Activated CD8-positive, alpha-beta T cell treated with anti-CD3 and anti-CD28 coated beads for 36 hours (primary cell): ENCODE measurements at regions of chr20 and their contacts with region 1.

Region 1: DNA sequence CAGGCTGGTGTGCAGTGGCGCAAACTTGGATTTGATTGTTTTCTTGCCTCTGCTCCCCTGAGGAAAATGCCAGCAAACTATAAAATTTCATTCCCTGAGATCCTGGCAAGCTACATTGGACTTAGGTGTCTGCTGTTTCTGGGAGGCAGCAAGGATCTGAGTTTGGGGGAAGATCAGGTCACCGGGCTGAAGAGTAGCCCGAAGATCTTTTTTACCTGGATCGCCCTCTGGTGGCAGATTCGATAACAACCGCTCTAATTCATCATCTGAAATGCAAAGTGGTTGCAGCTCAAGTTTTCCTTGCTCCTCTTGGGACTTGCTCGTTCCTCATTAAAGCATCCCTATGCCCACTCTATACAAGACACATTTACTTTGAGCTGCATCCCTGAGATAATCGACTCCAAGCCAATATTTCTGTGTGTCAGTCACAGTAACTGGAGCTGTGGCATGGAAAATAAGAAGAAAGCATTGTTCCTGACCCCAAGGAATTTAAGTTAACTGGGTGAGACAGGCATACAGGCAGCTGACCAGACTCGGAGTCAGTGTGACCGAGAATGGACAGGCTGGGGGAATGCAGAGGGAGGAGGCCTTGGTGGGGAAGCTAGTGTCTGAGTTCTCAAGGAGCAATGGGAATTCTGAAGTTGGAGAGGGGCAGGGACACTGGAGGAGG is 131.8 kb upstream of the PROKR2 start:
- DNase-seq: peak; percentile 77
- ATAC-seq: peak; percentile 56
- H3K4me3 Mint-ChIP-seq: no peak overlapping the region
- H3K27ac Mint-ChIP-seq: no peak overlapping the region
- H3K4me1 Mint-ChIP-seq: no peaks in the 10 kb centered on the region
- H3K27me3 Mint-ChIP-seq: peaks cover 23% of the 10 kb centered on the region
- CTCF ChIP-seq: peak; percentile 67

Region 2: DNA sequence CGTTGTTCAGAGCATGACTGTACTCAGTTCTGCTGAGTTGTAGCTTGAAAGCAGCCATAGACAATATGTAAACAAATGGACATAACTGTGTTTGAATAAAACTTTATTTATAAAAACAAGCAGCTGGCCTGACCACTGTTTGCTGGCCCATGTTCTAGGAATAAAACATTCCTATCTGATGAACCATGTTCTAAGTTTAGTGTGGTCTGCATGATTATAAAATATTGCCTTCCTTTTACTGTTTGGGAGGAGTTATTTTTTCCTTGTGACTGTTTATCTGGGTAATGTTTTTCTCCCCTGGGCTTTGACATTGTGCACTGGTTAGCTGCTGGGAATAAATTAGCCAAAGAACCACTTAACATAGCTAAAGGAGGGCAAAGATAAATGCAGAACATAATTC is 266.6 kb before region 1 on chr20:
- CTCF ChIA-PET with region 1: no interaction called
- POLR2A ChIA-PET with region 1: no interaction called
- intact Hi-C with region 1: no loop called
- DNase-seq: no peak
- ATAC-seq: no peak
- H3K4me3 Mint-ChIP-seq: no peak overlapping the region
- H3K27ac Mint-ChIP-seq: no peak overlapping the region
- H3K4me1 Mint-ChIP-seq: peaks cover 4% of the 10 kb centered on the region
- H3K27me3 Mint-ChIP-seq: no peaks in the 10 kb centered on the region
- CTCF ChIP-seq: no peak

Region 3: GRCh38 chr20:5205348-5206210 is 243.0 kb before region 1 on chr20:
- CTCF ChIA-PET with region 1: interaction called, 55 read pairs
- POLR2A ChIA-PET with region 1: no interaction called
- intact Hi-C with region 1: loop called (anchors 5 kb)
- DNase-seq: peak; percentile 81
- ATAC-seq: peak; percentile 99
- H3K4me3 Mint-ChIP-seq: no peak overlapping the region
- H3K27ac Mint-ChIP-seq: no peak overlapping the region
- H3K4me1 Mint-ChIP-seq: no peaks in the 10 kb centered on the region
- H3K27me3 Mint-ChIP-seq: no peaks in the 10 kb centered on the region
- CTCF ChIP-seq: peak; percentile 95

Region 4: DNA sequence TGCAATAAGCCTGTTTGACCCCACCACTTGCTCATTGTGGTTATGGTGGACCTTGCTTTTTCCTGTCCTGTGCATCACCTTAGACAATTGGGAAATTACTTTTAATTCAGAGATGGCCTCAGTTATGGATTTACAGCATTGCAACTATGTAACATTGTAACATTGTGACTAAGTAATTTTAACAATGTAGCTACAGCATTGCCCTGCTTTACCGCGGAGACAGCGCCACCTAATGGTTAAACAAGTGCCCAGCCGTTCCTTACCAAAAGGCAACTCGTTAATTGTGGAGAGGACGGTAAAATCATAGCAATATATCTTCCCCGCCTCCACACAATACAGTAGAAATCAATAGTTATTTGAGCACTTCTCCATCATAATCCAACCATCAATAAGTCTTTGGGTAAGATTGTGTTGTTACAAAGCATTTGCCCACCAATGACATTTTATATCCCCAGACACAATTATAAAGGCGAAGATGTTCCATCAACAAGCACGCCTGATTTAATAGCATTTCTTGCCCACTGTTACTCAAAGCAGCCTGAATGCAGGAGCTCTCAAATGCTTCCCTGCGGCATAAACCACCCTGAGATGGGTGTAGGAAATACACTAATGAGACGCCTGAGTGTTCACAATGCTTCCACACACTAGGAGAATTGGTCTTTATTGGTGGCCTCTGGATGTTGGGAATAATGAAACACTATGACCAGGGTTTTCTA is 225.5 kb before region 1 on chr20:
- CTCF ChIA-PET with region 1: interaction called, 32 read pairs
- POLR2A ChIA-PET with region 1: interaction called, 3 read pairs
- intact Hi-C with region 1: no loop called
- DNase-seq: peak; percentile 74
- ATAC-seq: peak; percentile 79
- H3K4me3 Mint-ChIP-seq: no peak overlapping the region
- H3K27ac Mint-ChIP-seq: no peak overlapping the region
- H3K4me1 Mint-ChIP-seq: no peaks in the 10 kb centered on the region
- H3K27me3 Mint-ChIP-seq: no peaks in the 10 kb centered on the region
- CTCF ChIP-seq: peak; percentile 87

Region 5: GRCh38 chr20:5430670-5431069 is 17.9 kb before region 1 on chr20:
- CTCF ChIA-PET with region 1: interaction called, 15 read pairs
- POLR2A ChIA-PET with region 1: no interaction called
- intact Hi-C with region 1: no loop called
- DNase-seq: no peak
- ATAC-seq: no peak
- H3K4me3 Mint-ChIP-seq: no peak overlapping the region
- H3K27ac Mint-ChIP-seq: no peak overlapping the region
- H3K4me1 Mint-ChIP-seq: no peaks in the 10 kb centered on the region
- H3K27me3 Mint-ChIP-seq: peaks cover 6% of the 10 kb centered on the region
- CTCF ChIP-seq: no peak

Region 6: DNA sequence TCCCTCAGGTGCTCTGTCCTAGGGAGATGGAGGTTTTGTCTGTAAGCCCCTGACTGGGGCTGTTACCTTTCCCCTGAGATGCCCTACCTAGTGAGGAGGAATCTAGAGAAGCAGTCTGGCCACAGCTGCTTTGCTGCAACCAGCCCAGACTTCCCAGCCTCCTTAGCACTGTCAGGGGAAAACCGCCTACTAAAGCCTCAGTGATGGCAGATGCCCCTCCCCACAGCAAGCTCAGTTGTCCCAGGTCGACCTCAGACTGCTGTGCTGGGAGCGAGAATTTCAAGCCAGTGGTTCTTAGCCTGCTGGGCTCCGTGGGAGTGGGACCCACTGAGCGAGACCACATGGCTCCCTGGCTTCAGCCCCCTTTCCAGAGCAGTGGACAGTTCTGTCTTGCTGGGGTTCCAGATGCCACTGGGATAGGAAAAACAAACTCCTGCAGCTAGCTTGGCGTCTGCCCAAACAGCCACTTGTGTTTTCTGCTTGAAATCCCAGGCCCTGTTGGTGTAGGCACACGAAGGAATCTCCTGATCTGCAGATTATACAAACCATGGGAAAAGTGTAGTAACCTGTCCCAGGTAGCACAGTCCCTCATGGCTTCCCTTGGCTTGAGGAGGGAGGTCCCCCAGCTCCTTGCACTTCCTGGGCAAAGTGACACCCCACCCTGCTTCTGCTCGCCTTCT is 14.6 kb after region 1 on chr20:
- CTCF ChIA-PET with region 1: interaction called, 18 read pairs
- POLR2A ChIA-PET with region 1: no interaction called
- intact Hi-C with region 1: no loop called
- DNase-seq: no peak
- ATAC-seq: no peak
- H3K4me3 Mint-ChIP-seq: no peak overlapping the region
- H3K27ac Mint-ChIP-seq: no peak overlapping the region
- H3K4me1 Mint-ChIP-seq: no peaks in the 10 kb centered on the region
- H3K27me3 Mint-ChIP-seq: peaks cover 24% of the 10 kb centered on the region
- CTCF ChIP-seq: no peak